ENCODE measurements at regions of chr4 and their contacts with region 1.

Region 1: GRCh38 chr4:85968945-85969819 is 390.7 kb downstream of the MAPK10 start:
- H3K4me3 Mint-ChIP-seq: no peak overlapping the region
- H3K27ac Mint-ChIP-seq: no peak overlapping the region
- H3K4me1 Mint-ChIP-seq: no peaks in the 10 kb centered on the region
- H3K27me3 Mint-ChIP-seq: no peaks in the 10 kb centered on the region

Region 2: GRCh38 chr4:85084380-85085094 is 884.6 kb before region 1 on chr4:
- intact Hi-C with region 1: loop called (anchors 5 kb)
- H3K4me3 Mint-ChIP-seq: no peak overlapping the region
- H3K27ac Mint-ChIP-seq: no peak overlapping the region
- H3K4me1 Mint-ChIP-seq: no peaks in the 10 kb centered on the region
- H3K27me3 Mint-ChIP-seq: no peaks in the 10 kb centered on the region

Region 3: DNA sequence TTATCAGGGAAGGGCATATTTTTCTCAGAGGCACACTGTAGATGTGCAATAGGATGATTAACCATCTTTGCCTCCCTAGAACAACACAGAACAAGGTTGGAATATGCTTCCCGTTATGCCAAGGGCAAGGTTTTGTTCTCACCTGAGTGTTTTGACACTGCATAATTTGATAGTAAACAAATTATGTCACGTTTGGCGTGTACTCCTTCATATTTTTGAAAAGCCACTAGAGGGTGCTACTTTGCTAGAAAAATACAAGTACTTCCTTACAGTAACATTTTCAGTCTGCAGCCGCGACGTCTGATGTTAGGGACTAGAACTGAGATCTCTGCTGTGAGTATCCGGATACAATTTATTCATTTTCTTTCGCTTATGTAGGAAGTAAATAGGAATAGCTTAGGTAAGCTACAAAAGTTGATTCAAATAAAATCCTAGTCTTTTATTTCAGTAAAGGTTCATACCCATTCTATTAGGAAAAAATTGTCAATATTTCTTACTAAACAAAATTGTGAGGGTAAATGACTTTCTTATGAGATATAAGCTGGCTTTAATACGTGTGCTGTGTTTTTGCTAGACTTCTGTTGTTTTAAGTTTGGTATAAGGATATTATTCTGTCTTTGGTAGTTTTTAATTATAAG is 821.6 kb before region 1 on chr4:
- intact Hi-C with region 1: loop called (anchors 1 kb)
- H3K4me3 Mint-ChIP-seq: no peak overlapping the region
- H3K27ac Mint-ChIP-seq: no peak overlapping the region
- H3K4me1 Mint-ChIP-seq: no peaks in the 10 kb centered on the region
- H3K27me3 Mint-ChIP-seq: peaks cover 10% of the 10 kb centered on the region

Region 4: GRCh38 chr4:85761803-85762528 is 207.2 kb before region 1 on chr4:
- intact Hi-C with region 1: loop called (anchors 10 kb)
- H3K4me3 Mint-ChIP-seq: no peak overlapping the region
- H3K27ac Mint-ChIP-seq: peak overlapping the region; percentile 56
- H3K4me1 Mint-ChIP-seq: peaks cover 12% of the 10 kb centered on the region
- H3K27me3 Mint-ChIP-seq: no peaks in the 10 kb centered on the region

Region 5: DNA sequence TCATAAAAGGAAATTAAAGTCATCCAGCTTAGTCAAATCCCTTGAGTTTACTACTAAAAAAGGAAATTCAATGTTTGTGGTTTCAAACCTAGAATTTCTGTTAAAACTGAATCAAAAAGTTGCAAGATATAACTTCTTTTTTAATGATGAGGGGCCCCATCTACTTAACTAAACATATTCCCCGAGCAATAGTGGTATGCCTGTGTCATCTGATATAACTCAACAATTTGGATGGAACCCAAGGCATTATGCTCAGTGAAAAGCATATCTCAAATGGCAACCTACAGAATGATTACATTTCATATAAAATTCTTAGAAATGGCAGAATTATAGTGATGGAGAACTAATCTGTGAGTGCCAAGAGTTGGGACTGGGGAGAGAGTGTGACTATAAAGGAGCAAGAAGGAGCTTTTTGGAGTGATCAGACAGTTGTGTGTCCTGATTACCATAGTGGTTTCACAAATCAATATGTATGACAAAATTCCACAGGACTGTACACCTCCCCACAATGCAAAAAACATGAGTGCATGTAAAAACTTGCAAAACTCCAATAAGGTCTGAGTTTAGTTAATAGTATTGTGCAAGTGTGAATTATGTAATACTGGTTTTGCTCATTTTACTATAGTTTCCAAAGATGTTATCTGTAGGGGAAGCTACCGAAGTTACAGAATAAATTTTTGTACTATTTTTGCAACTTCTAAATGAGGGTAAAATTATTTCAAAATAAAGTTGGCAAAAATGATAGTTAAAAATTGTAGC is 171.0 kb before region 1 on chr4:
- intact Hi-C with region 1: loop called (anchors 1 kb)
- H3K4me3 Mint-ChIP-seq: no peak overlapping the region
- H3K27ac Mint-ChIP-seq: no peak overlapping the region
- H3K4me1 Mint-ChIP-seq: peaks cover 6% of the 10 kb centered on the region
- H3K27me3 Mint-ChIP-seq: no peaks in the 10 kb centered on the region

Region 6: DNA sequence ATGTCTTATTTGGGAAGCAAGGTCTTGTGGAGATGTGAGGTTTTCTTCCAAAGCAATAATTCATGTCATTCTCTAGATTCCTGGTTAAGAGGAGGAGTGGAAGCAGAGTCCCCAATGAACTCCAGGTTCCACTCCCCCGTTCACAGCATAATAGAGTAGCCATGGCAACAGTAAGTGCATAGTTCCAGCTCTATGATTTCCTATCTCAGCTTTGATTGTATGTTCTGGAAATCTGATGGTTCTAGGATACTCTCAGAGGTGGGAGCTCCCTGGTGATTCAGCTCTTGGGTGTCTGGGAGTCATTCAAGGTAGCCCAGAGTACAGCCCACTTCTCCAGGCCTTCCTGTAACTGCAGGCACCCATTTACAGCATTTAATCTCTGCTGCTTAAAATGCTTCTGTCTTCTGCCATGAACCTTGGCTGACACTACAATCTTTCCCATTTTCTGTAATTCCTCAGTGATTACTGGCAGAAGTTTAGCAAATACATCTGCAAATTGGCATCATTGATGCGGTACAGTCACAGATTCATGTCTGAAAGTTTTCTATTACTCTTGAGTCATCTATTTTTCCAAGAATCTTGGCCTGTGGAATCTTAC is 148.6 kb after region 1 on chr4:
- intact Hi-C with region 1: no loop called
- H3K4me3 Mint-ChIP-seq: no peak overlapping the region
- H3K27ac Mint-ChIP-seq: no peak overlapping the region
- H3K4me1 Mint-ChIP-seq: no peaks in the 10 kb centered on the region
- H3K27me3 Mint-ChIP-seq: no peaks in the 10 kb centered on the region

Measured in dendritic cell treated with granulocyte-macrophage colony-stimulating factor and Interleukin-4, amounts not matched to agents 40 ng/mL and 50 ng/mL, for 4 days (primary cell).